Activated CD4-positive, alpha-beta T cell treated with anti-CD3 and anti-CD28 coated beads, Interleukin-2, amount 10 ng/mL, durations not matched to agents 24 days and 14 days (primary cell): ENCODE measurements at regions of chr9 and their contacts with region 1.

Region 1: GRCh38 chr9:128881901-128882681 is at the starts of genes KYAT1 and LRRC8A:
- DNase-seq: peak; percentile 100
- H3K4me3 Mint-ChIP-seq: peak within 1 kb of the TSS; percentile 97
- H3K27ac Mint-ChIP-seq: peak within 1 kb of the TSS; percentile 95
- H3K4me1 Mint-ChIP-seq: peaks cover 51% of the 10 kb centered on the region
- H3K27me3 Mint-ChIP-seq: no peaks in the 10 kb centered on the region
- total RNA-seq, gene KYAT1: 11.7 and 14.4 TPM in 2 replicates
- total RNA-seq, gene LRRC8A: 27.7 and 28.4 TPM in 2 replicates

Region 2: DNA sequence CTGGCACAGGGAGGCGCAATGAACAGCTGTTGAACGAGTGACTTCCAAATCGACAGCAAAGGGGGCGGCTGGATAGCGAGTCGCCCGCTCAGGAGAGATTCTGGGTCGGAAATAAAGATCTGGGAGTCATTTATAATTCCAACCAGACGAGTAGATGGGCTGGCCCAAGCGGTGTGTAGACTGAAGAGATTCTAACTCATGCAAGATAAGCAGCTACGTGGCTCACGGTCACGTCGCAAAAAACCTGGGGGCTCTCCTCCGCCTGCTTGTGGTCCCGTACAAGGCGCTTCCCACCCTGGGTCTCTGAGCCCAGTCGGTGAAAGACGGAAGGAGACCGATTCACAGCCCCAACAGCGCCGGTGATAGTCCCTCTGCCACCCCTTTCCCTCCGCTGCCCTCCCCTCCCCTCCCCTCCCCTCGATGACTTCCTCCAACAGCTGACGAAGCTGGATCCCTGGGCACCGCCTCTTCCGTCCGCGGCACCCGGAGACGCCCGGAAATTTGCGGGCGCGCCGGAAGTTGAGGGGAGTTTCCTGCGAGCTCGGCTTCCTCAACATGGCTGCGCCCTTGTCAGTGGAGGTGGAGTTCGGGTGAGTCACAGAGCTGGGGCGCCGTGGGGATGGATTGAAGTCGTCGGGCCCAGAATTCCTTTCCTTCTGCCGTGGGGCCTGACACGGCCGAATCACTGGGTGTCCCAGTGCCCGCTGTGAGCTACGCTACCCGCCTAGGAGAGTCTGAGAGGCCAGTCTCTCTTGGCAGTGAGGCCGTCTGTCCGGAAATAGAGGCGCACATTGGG is 511.1 kb before region 1 on chr9 and contains the start of gene URM1:
- intact Hi-C with region 1: loop called (anchors 5 kb)
- DNase-seq: peak; percentile 99
- H3K4me3 Mint-ChIP-seq: peak within 1 kb of the TSS; percentile 99
- H3K27ac Mint-ChIP-seq: peak within 1 kb of the TSS; percentile 93
- H3K4me1 Mint-ChIP-seq: peaks cover 29% of the 10 kb centered on the region
- H3K27me3 Mint-ChIP-seq: no peaks in the 10 kb centered on the region
- total RNA-seq, gene URM1: 87.2 and 98.3 TPM in 2 replicates

Region 3: DNA sequence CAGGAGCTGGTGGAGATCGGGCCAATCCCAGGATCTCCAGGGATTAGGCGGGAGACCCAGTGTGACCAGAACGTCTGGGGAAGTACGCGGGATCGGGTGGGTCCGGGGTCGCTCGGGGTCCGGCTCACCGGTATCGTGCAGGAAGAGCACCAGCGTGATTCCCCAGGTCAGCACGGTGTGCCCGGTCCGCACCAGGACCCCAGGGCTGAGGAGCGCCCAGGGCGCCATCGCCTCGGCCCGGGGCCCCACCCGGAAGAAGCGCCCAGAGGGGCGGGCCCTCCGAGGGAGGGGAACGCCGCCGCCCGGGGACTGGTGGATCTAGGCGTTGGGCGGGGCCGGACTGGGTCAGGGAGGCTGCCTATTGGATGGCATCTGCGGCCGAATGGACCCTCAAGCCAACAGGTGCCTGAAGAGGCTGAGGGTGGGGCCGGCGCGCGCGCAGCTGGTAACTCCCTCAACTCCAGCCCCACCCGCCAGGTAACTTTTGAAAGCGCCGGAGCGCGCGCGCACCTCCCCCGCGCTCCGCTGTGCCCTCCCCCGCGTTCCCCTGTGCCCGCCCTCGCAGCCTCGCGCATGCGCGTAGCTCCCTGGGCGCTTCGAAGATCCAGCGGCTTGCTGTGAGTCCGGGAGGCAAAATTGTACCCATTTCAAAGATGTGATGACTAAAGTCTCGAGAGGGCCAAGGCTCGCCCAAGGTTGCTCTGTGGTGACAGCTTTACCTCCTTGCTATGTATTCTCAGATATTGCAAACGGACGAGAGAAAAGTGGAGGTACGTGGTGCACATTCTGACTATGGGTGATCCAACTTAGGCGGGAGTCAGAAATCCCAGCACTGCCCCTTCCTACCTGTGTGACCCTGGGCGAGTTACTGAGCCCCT is 158.0 kb before region 1 on chr9 and contains the start of gene ZDHHC12:
- intact Hi-C with region 1: no loop called
- DNase-seq: peak; percentile 100
- H3K4me3 Mint-ChIP-seq: peak within 1 kb of the TSS; percentile 99
- H3K27ac Mint-ChIP-seq: peak within 1 kb of the TSS; percentile 94
- H3K4me1 Mint-ChIP-seq: peaks cover 37% of the 10 kb centered on the region
- H3K27me3 Mint-ChIP-seq: no peaks in the 10 kb centered on the region
- total RNA-seq, gene ZDHHC12: 46.9 and 48.4 TPM in 2 replicates

Region 4: GRCh38 chr9:128771745-128772519 is 110.2 kb before region 1 on chr9 and contains the start of gene ZER1:
- intact Hi-C with region 1: loop called (anchors 1 kb)
- DNase-seq: peak; percentile 99
- H3K4me3 Mint-ChIP-seq: peak within 1 kb of the TSS; percentile 87
- H3K27ac Mint-ChIP-seq: peak within 1 kb of the TSS; percentile 90
- H3K4me1 Mint-ChIP-seq: peaks cover 15% of the 10 kb centered on the region
- H3K27me3 Mint-ChIP-seq: no peaks in the 10 kb centered on the region
- total RNA-seq, gene ZER1: 12.3 and 14.4 TPM in 2 replicates

Region 5: DNA sequence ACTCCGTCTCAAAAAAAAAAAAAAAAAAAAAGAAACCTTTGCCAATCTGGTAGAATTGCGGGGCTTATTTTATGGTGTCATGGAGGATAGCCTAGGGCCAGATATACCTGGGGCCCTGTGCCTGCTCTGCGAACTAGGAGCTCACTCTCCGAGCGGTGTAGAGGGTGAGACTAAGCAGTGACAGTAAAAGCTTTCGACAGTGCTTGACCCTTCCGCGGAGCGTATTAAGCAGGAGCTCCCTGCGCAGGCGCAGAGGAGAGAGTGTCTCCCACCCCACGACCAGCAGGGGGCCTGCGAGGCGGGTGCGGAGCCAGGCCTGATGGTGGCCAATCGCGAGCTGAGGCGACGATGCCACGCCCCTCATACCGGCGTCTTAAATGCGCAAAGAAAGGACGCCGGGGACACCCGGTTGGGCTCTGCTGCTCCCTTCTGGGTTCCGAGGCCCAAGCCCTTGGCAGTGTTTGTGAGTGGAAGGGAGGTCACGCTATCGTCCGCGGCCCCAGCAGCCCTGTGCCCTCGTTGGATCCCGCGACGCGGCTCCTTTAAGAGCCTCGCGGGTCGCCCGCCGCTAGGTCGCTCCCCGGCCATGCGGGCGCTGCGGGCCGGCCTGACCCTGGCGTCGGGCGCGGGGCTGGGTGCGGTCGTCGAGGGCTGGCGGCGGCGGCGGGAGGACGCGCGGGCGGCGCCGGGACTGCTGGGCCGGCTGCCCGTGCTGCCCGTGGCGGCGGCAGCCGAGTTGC is 63.8 kb before region 1 on chr9 and contains the start of gene ENDOG:
- intact Hi-C with region 1: loop called (anchors 1 kb)
- DNase-seq: peak; percentile 100
- H3K4me3 Mint-ChIP-seq: peak within 1 kb of the TSS; percentile 85
- H3K27ac Mint-ChIP-seq: peak within 1 kb of the TSS; percentile 84
- H3K4me1 Mint-ChIP-seq: peaks cover 12% of the 10 kb centered on the region
- H3K27me3 Mint-ChIP-seq: no peaks in the 10 kb centered on the region
- total RNA-seq, gene ENDOG: 22.9 and 23.3 TPM in 2 replicates

Region 6: DNA sequence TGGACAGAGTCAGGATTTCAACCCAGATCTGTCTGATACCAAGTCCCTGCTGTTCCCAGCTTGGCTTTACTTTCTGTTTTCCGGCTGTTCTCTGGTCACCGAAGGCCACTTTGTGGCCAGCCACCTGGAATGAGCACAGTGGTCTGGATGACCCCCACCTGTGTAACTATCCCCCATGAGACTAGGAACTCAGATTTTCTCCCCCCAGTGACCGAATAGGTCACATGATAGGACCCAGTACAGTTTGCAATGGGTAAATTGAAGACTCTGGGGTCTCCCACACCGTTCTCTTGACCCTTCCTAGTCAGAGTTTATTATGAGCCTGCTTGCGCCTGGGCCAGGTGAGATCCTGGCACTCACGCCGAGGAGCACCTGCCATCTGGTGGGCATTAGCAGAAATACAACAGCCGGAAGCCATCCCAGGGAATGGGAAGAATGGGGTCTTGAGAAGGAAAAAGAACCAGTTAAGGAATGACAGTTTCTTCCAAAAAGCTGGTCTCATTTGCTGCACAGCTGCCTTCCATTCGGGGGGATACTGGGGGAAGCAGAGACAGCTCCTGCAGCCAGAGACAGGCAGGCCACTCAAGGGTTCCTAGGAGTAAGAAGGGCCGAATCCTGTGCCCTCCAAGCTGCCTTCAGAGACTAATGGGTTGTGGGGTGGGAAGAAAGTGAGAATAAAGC is 45.8 kb after region 1 on chr9:
- intact Hi-C with region 1: loop called (anchors 1 kb)
- DNase-seq: peak; percentile 86
- H3K4me3 Mint-ChIP-seq: no peak overlapping the region
- H3K27ac Mint-ChIP-seq: no peak overlapping the region
- H3K4me1 Mint-ChIP-seq: peaks cover 11% of the 10 kb centered on the region
- H3K27me3 Mint-ChIP-seq: no peaks in the 10 kb centered on the region

Region 7: GRCh38 chr9:128940271-128940921 is 58.3 kb after region 1 on chr9:
- intact Hi-C with region 1: no loop called
- DNase-seq: no peak
- H3K4me3 Mint-ChIP-seq: no peak overlapping the region
- H3K27ac Mint-ChIP-seq: no peak overlapping the region
- H3K4me1 Mint-ChIP-seq: peaks cover 2% of the 10 kb centered on the region
- H3K27me3 Mint-ChIP-seq: no peaks in the 10 kb centered on the region

Region 8: DNA sequence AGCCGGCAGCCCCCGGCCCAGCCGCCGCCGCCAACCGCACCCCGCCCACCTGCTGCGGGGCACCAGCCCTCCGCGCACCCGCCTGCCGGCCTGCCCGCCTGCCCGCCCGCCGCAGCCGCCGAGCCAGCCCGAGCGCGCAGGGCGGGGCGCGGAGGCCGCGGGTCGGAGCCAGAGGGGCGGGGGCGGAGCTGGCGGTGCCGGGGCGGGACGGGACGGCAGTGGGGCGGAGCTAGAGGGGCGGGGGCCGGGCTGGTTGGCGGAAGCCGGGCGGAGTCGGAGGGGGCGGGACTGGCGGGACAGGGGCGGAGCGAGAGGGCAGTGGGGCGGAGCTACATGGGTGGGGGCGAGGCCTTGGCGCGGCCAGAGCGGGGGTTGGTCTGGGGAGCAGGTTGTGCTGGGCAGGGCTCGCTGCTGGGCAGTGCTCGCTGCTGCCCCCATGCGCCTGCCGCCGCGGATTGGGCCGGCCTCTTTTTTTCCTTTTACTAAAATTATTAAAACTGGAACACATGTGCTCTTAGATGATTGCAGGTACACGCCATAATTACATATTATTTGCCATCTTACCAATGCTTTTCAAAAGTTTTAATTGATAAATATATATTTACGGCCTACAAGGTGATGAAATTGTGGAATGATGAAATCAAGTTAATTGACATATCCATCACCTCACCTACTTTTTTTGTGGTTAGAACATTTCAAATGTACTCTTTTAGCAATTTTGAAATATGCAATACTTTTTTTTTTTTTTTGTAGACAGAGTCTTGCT is 146.3 kb after region 1 on chr9 and contains the start of gene SH3GLB2:
- intact Hi-C with region 1: loop called (anchors 2 kb)
- DNase-seq: peak; percentile 96
- H3K4me3 Mint-ChIP-seq: peak within 1 kb of the TSS; percentile 85
- H3K27ac Mint-ChIP-seq: peak within 1 kb of the TSS; percentile 77
- H3K4me1 Mint-ChIP-seq: peaks cover 17% of the 10 kb centered on the region
- H3K27me3 Mint-ChIP-seq: no peaks in the 10 kb centered on the region
- total RNA-seq, gene SH3GLB2: 69.6 and 73.9 TPM in 2 replicates

Region 9: GRCh38 chr9:129362287-129363000 is 480.4 kb after region 1 on chr9:
- intact Hi-C with region 1: no loop called
- DNase-seq: no peak
- H3K4me3 Mint-ChIP-seq: no peak overlapping the region
- H3K27ac Mint-ChIP-seq: no peak overlapping the region
- H3K4me1 Mint-ChIP-seq: no peaks in the 10 kb centered on the region
- H3K27me3 Mint-ChIP-seq: peaks cover 3% of the 10 kb centered on the region